Left ventricle myocardium inferior (tissue), 1 donor: ENCODE measurements at regions of chr12 and their contacts with region 1.

Region 1: GRCh38 chr12:110937104-110937641 is 16.8 kb upstream of the MYL2 start:
- DNase-seq: peak; percentile 46
- H3K4me3 ChIP-seq: peak overlapping the region; percentile 45
- H3K27ac ChIP-seq: no peak overlapping the region
- H3K4me1 ChIP-seq: peaks cover 26% of the 10 kb centered on the region
- H3K27me3 ChIP-seq: peaks cover 36% of the 10 kb centered on the region
- CTCF ChIP-seq: peak; percentile 96

Region 2: DNA sequence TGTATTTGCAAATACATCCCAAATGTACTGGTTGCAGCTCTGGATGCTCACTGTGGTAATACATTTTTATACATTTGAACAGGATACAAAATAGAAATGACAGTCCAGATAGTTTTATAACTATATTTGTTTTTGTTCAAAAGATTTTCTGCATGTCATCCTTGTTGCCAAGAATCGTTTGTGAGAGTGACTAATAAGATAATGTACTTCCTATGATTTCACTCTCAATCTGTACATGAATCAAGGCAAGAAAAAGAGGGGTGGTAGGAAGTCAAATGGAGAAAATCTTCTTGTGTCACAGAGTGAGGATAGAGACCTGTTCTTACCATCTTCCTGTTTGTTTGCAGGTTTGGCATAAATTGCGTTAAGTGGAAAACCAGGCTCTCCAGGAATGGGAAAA is 500.9 kb before region 1 on chr12:
- intact Hi-C with region 1: no loop called
- DNase-seq: no peak
- H3K4me3 ChIP-seq: no peak overlapping the region
- H3K27ac ChIP-seq: no peak overlapping the region
- H3K4me1 ChIP-seq: peaks cover 5% of the 10 kb centered on the region
- H3K27me3 ChIP-seq: no peaks in the 10 kb centered on the region
- CTCF ChIP-seq: no peak

Region 3: GRCh38 chr12:110913119-110914056 is 23.8 kb before region 1 on chr12:
- intact Hi-C with region 1: no loop called
- DNase-seq: no peak
- H3K4me3 ChIP-seq: no peak overlapping the region
- H3K27ac ChIP-seq: peak overlapping the region; percentile 61
- H3K4me1 ChIP-seq: peaks cover 10% of the 10 kb centered on the region
- H3K27me3 ChIP-seq: peaks cover 5% of the 10 kb centered on the region
- CTCF ChIP-seq: no peak

Region 4: DNA sequence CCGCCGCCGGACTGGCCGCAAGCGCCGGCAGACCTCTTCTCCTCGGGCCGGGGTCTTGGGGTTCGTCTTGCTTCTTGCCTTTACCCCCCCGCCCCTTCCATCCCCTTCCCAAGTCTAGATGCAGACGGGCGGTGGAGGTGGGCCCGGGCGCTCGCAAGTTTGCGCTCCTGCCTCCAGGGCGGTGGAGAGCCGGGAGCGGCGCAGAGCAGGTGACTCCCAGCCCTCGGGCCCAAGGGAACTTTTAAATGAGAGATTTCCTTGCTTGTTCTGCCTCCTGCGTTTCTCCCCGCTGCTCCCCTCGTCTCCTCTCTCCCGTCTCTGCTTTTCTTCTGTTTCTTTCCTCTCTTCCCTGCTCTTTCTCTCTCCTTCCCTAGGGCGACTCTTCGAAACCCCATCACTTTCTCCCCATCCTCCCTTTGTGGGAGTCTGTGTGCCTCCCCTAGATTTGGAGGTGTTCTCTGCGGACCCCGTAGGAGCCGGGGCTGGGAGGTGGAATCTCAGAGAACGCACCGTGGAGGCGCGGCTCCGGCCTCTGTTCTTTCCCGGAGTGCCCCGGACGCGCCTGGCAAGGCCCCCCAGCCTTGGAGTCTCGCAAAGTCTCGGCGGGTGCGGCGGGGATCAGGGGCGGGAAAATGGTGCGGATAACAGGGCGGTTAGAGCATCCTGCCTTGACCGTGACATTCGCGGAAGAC is 97.9 kb after region 1 on chr12:
- intact Hi-C with region 1: no loop called
- DNase-seq: no peak
- H3K4me3 ChIP-seq: peak overlapping the region; percentile 56
- H3K27ac ChIP-seq: no peak overlapping the region
- H3K4me1 ChIP-seq: peaks cover 11% of the 10 kb centered on the region
- H3K27me3 ChIP-seq: peaks cover 98% of the 10 kb centered on the region
- CTCF ChIP-seq: no peak

Region 5: DNA sequence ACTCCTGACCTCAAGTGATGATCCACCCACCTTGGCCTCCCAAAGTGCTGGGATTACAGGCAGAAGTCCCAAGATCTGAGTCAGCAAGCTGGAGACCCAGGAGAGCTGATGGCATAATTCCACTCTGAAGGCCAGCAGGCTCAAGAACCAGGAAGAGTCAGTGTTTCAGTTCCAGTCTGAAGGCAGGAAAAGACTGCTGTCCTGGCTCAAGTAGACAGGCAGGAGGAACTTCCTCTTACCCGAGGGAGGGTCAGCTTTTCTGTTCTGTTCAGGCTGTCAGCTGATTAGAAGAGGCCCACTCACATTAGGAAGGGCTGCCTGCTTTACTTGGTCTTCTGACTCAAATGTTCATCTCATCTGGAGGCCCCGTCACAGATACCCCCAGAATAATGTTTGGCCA is 189.2 kb after region 1 on chr12:
- intact Hi-C with region 1: no loop called
- DNase-seq: no peak
- H3K4me3 ChIP-seq: no peak overlapping the region
- H3K27ac ChIP-seq: no peak overlapping the region
- H3K4me1 ChIP-seq: peaks cover 7% of the 10 kb centered on the region
- H3K27me3 ChIP-seq: peaks cover 6% of the 10 kb centered on the region
- CTCF ChIP-seq: no peak

Region 6: GRCh38 chr12:111313833-111314259 is 376.7 kb after region 1 on chr12:
- intact Hi-C with region 1: loop called (anchors 10 kb)
- DNase-seq: peak; percentile 67
- H3K4me3 ChIP-seq: no peak overlapping the region
- H3K27ac ChIP-seq: no peak overlapping the region
- H3K4me1 ChIP-seq: no peaks in the 10 kb centered on the region
- H3K27me3 ChIP-seq: peaks cover 46% of the 10 kb centered on the region
- CTCF ChIP-seq: peak; percentile 94